Vagina (tissue), 2 donors: ENCODE measurements at regions of chr7 and their contacts with region 1.

Region 1: GRCh38 chr7:111388912-111389311 is 173.4 kb downstream of the IMMP2L start:
- DNase-seq: no peak
- H3K4me3 ChIP-seq: no peak overlapping the region
- H3K27ac ChIP-seq: no peak overlapping the region
- H3K4me1 ChIP-seq: peaks cover 20% of the 10 kb centered on the region
- H3K27me3 ChIP-seq: no peaks in the 10 kb centered on the region
- CTCF ChIP-seq: no peak
- POLR2A ChIP-seq: no peak

Region 2: GRCh38 chr7:111298091-111298490 is 90.8 kb before region 1 on chr7:
- intact Hi-C with region 1: no loop called
- DNase-seq: no peak
- H3K4me3 ChIP-seq: no peak overlapping the region
- H3K27ac ChIP-seq: no peak overlapping the region
- H3K4me1 ChIP-seq: no peaks in the 10 kb centered on the region
- H3K27me3 ChIP-seq: no peaks in the 10 kb centered on the region
- CTCF ChIP-seq: no peak
- POLR2A ChIP-seq: no peak

Region 3: DNA sequence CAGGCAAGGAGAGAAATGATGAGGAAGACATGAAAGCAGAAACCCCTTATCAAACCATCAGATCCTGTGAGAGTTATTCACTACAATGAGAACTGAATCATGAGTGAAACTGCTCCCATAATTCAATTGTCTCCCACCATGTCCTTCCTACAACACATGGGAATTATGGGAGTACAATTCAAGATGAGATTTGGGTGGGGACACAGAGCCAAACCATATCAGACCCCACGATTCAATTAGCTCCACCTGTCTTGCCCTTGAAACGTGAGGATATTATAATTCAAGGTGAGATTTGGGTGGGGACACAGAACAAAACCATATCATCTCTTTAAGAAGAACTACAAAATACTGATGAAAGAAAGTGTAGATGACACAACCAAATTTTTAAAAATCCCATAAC is 44.5 kb after region 1 on chr7:
- intact Hi-C with region 1: loop called (anchors 1 kb)
- DNase-seq: no peak
- H3K4me3 ChIP-seq: no peak overlapping the region
- H3K27ac ChIP-seq: no peak overlapping the region
- H3K4me1 ChIP-seq: no peaks in the 10 kb centered on the region
- H3K27me3 ChIP-seq: no peaks in the 10 kb centered on the region
- CTCF ChIP-seq: no peak
- POLR2A ChIP-seq: no peak